MCF 10A (cell line): ENCODE measurements at regions of chr11 and their contacts with region 1.

Region 1: DNA sequence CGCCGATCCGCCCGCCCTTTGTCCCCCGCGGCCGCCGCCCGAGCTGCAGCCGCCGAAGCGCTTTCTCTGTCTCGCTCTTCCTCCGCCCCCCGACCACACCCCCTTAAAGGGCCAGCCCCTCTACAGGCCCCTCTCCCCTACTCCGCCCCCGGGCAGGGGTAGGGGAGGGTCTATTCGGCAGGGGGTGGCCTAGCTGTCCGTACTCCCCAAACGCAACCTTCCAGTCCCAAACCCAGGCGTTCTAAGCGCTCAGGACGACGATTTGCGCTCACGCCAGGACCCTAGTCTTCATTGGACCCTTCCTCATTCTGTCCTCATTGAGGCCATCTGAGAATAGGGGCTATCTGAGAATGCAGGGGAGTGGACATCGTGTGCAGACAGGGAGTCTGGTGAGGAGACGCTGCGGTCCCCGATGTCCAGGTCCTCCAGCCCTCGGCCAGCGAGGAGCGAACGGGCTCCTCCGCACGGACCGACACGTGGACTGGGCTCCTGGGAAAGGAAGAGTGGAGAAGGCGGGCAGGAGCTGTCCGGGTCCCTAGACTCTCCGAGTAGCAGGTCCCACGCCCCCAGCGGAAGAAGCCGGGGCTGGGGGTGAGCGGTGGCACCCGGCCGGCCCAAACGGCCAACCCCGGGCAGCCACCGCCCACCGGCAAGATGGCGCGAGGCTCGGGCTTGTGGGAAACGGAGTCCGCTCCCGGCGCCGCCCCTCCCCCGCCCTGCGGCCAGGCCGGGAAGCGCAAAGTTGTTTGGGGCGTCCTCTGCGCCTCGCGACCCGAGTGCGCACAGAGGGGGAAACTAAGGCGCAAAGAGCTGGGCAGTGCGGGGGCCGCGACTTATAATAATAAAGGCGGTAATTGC is at the start of gene PPP1R14B:
- DNase-seq: peak; percentile 86
- H3K4me3 Mint-ChIP-seq: peak within 1 kb of the TSS; percentile 93
- H3K27ac Mint-ChIP-seq: peak within 1 kb of the TSS; percentile 69
- H3K4me1 Mint-ChIP-seq: peaks cover 15% of the 10 kb centered on the region
- H3K27me3 Mint-ChIP-seq: no peaks in the 10 kb centered on the region
- CTCF ChIP-seq: no peak
- total RNA-seq, gene PPP1R14B: 583 and 684 TPM in 2 replicates

Region 2: DNA sequence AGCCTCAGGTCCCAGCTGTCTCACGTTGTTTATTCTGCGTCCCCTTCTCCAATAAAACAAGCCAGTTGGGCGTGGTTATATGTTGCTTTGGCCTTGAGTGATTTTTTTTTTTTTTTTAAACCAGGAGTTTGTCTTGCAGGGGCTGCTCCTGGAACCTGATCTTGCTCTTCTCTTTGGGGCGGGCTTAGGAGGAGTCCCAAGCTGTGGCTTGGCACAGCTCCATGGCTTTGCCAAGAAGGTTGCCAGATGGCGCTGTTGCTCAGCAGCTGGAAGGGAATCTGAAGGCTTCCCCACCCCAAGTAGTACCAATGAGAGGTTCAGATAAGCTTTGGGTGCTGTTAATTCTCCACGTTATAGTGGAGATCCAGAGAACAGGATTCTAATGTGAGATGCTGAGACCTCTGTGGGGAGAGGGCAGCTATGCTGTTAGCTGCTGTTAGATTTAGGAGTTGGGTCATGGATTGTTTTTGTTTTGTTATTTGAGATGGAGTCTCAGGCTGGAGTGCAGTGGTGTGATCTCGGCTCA is 42.6 kb before region 1 on chr11:
- CTCF ChIA-PET with region 1: interaction called, 5 read pairs
- POLR2A ChIA-PET with region 1: interaction called, 11 read pairs
- intact Hi-C with region 1: loop called (anchors 5 kb)
- DNase-seq: peak; percentile 96
- H3K4me3 Mint-ChIP-seq: no peak overlapping the region
- H3K27ac Mint-ChIP-seq: peak overlapping the region; percentile 37
- H3K4me1 Mint-ChIP-seq: peaks cover 12% of the 10 kb centered on the region
- H3K27me3 Mint-ChIP-seq: no peaks in the 10 kb centered on the region
- CTCF ChIP-seq: peak; percentile 83

Region 3: DNA sequence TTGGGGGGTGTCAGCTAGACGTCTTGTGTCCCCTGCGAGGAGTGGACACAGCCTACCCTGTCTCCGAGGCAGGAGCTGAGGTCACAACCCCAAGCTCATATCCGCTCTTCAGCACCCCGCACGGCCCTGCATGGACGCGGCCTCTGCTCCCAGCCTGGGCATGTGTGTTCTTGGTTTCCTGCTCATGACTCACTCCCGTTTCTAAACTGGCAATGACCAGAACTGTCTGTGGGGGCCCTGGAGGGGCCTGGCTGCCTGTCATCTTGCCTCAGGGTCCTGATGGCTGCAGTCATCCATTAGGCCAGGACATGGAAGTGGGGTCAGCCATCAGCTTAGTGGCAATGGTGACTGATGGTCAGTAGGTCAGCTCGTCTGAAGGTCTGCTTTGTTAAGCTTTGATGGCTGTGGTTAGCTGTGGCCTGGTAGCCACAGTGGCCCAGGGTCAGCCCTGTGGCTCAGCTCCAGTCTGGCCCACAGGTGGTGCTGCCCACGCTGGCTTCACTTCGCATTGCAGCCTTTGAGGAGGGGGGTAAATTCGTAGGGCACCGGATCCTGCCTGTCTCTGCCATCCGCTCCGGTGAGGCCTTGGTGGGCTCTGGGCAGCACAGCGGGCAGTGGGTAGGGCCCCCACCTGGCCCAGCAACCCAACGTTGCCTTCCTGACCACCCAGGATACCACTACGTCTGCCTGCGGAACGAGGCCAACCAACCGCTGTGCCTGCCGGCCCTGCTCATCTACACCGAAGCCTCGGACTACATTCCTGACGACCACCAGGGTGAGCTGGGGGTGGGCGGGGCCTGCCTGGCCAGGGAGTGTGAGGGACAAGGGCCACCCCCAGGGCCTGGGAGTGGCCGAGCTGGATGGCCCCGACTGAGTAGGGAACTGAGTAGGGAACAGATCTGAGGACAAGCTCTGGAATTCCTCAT is 16.2 kb after region 1 on chr11:
- CTCF ChIA-PET with region 1: interaction called, 36 read pairs
- POLR2A ChIA-PET with region 1: interaction called, 75 read pairs
- intact Hi-C with region 1: no loop called
- DNase-seq: peak; percentile 42
- H3K4me3 Mint-ChIP-seq: no peak overlapping the region
- H3K27ac Mint-ChIP-seq: no peak overlapping the region
- H3K4me1 Mint-ChIP-seq: peaks cover 13% of the 10 kb centered on the region
- H3K27me3 Mint-ChIP-seq: no peaks in the 10 kb centered on the region
- CTCF ChIP-seq: no peak

Region 4: DNA sequence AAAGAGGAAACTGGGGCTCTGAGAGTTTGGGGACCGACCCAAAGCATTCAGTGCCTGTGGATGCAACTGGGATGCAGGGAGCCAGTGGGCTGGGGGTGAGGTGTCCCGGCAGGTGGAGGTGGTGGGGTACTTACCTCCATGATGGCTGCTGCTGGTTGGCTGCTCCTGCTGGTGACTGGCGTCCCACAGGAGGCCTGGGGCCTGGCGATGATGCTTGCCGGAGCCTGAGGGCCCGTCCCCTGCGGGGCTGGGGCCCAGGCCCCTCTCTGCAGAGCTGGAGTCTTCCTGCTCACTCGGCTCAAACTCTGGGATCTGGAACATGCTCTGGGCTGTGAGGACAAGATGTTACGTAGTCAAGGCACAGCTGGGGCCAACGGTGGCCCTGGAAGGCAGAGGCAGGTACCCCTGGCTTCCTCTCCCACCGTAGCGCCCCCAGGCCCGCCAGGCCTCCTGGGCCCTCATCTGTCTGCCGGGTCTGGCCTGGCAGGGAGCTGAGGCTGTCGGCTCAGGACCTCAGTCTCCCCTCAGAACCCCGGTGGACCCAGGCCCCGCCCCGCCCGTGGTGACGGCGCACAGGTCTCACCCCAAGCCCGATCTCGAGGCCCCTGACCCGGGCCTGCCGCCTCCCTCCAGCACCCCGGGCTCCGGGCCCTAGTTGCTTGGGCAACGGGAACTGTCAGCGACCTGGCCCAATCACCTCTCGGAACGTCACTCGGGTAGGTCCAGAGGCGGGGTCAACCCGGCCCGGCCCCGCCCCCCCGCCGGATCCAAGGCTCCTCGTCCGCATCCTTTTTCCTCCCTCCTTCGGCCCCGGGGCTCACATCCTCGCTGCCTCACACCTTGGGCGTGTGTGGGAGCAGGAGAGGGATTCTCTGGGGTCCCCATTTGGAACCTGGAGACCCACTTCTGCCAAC is 37.2 kb after region 1 on chr11 and contains the start of gene BAD:
- CTCF ChIA-PET with region 1: interaction called, 7 read pairs
- POLR2A ChIA-PET with region 1: interaction called, 15 read pairs
- intact Hi-C with region 1: loop called (anchors 5 kb)
- DNase-seq: peak; percentile 94
- H3K4me3 Mint-ChIP-seq: peak within 1 kb of the TSS; percentile 76
- H3K27ac Mint-ChIP-seq: peak within 1 kb of the TSS; percentile 84
- H3K4me1 Mint-ChIP-seq: peaks cover 10% of the 10 kb centered on the region
- H3K27me3 Mint-ChIP-seq: no peaks in the 10 kb centered on the region
- CTCF ChIP-seq: no peak
- total RNA-seq, gene BAD: 67.4 and 79.7 TPM in 2 replicates

Region 5: DNA sequence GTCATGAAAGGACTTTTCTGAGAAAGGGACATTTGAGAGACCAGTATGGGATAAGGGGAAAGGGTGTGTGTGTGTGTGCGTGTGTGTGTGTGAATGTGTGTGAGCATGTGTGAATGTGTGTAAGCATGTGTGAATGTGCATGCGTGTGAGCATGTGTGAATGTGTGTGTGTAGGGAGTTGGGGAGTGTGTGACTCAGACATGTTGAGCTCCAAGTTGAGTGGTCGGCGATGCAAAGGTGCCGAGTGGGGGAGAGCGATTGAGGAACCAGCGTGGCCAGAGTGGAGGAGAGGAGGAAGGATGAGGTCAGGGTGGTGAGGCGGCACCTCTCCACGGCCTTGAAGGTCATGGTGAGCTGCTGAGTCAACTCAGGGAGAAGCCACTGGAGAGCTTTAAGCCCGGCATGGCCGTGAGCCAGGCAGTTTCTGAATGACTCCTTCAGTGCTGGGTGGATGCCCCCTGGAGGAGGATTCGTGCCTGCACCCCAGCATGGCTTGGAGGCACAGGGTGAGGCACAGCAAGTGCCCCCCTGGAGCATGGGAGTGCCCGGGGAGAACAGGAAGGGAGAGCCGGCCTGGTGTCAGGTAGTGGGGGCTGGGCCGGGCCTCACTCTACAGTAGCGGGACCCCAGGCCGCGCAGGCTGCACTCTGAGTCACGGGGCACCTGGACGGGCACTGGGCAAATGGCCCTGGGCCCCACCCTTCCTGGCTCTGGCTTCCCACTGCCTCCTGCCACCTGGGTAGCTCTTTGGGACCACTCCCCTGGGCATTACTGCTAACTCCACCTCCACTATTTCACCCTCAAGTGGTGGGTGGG is 84.7 kb after region 1 on chr11:
- CTCF ChIA-PET with region 1: interaction called, 8 read pairs
- POLR2A ChIA-PET with region 1: interaction called, 12 read pairs
- intact Hi-C with region 1: no loop called
- DNase-seq: peak; percentile 98
- H3K4me3 Mint-ChIP-seq: peak overlapping the region; percentile 8
- H3K27ac Mint-ChIP-seq: peak overlapping the region; percentile 61
- H3K4me1 Mint-ChIP-seq: peaks cover 20% of the 10 kb centered on the region
- H3K27me3 Mint-ChIP-seq: no peaks in the 10 kb centered on the region
- CTCF ChIP-seq: peak; percentile 79